ENCODE measurements at regions of chr14 and their contacts with region 1.

Region 1: DNA sequence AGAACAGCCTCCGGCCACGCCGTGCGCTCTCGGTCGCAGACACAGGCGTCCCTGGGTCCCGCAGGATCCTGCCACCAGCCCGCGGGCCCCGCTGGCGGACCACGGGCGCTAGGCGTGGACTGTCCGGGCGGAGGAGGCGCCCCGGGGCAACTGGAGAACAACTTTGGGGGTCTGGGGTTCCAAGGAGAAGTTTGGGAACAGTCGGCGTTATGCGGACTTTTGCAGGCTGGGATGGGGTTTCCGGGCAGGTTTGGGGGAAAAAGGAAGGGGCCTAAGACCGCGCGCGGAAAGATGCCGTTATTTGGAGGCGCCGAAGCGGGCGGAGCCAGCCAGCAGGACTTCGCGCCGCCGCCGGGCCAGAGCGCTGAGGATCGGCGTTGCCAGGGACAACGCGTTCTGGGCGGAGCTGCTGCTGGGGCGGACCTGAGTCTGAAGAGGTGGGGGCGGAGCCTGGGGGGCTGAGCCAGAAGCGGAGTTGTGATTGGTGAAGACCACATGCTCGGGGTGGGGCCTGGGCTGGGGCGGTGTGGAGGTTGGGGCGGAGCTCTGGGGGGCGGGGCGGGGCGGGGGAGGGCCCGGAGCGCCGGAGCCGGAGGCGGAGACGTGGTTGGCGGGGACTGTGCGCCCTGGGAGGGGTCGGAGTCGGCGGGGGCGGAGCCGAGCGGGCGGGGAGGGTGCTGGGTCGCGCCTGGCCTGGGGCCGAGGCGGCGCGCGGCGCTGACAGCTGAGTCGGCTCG is at the start of gene CYP46A1:
- DNase-seq: peak; percentile 98 to 100
- H3K4me3 ChIP-seq: peak within 1 kb of the TSS; percentile 92 to 96
- H3K27ac ChIP-seq: peak within 1 kb of the TSS; percentile 92 to 97
- H3K4me1 ChIP-seq: peaks cover 0 to 5% of the 10 kb centered on the region in 2 donors
- H3K27me3 ChIP-seq: no peaks in the 10 kb centered on the region
- CTCF ChIP-seq: no peak
- total RNA-seq, gene CYP46A1: not detected

Region 2: DNA sequence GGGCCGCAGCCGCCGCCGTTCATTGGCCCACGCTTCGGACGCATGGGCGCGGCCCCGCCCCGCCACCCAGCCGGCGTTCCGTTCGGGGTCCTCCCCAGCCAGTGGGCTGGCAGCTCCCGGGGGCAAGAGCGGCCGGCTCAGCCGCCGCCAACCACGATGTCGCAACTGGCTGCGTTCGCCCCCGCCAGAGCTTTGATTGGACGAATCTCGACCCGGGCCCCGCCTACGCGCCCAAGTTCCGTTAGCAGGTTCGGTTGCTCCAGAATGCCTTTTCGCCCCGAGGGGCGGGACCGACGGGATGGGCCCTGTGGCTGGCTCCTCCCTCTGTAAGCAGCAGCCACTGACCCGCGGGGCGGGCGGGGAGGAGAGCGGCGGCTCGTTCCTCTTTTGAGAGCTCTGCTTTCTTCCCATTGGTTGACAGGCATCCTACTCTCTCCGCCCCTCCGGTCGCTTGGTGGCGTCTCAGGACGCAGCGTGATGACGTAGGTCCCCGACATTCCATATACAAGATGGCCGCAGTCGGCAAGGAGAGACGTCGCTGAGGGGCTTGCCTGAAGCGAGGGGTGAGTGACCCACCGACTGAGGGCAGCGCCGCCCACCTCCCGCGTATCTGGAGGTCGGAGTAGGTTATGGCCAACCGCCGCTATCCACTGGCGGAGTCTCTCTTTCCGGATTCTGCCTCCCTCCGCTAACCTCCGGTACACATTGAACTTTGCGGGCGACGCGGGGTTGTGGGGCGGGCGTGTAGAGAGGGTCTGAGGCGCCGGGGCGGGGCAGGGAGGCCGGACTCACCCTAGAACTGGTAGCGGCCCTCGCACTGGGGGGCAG is 202.7 kb before region 1 on chr14 and contains the start of gene CCNK:
- intact Hi-C with region 1: loop called (anchors 1 kb)
- DNase-seq: peak; percentile 100
- H3K4me3 ChIP-seq: peak within 1 kb of the TSS; percentile 87 to 95
- H3K27ac ChIP-seq: peak within 1 kb of the TSS; percentile 96 to 98
- H3K4me1 ChIP-seq: peaks cover 6 to 34% of the 10 kb centered on the region in 2 donors
- H3K27me3 ChIP-seq: no peaks in the 10 kb centered on the region
- CTCF ChIP-seq: no peak
- total RNA-seq, gene CCNK: 21.9 TPM

Region 3: GRCh38 chr14:99729991-99730868 is 46.4 kb after region 1 on chr14:
- intact Hi-C with region 1: loop called (anchors 2 kb)
- DNase-seq: peak; percentile 1 to 81
- H3K4me3 ChIP-seq: peak overlapping the region; percentile 52 to 85
- H3K27ac ChIP-seq: peak overlapping the region; percentile 22 to 30
- H3K4me1 ChIP-seq: peaks cover 3 to 13% of the 10 kb centered on the region in 2 donors
- H3K27me3 ChIP-seq: no peaks in the 10 kb centered on the region
- CTCF ChIP-seq: peak; percentile 66 to 89 (median 78)

Region 4: GRCh38 chr14:99884834-99885648 is 201.3 kb after region 1 on chr14:
- intact Hi-C with region 1: loop called (anchors 1 kb)
- DNase-seq: no peak
- H3K4me3 ChIP-seq: no peak overlapping the region
- H3K27ac ChIP-seq: no peak overlapping the region
- H3K4me1 ChIP-seq: peaks cover 0 to 4% of the 10 kb centered on the region in 2 donors
- H3K27me3 ChIP-seq: no peaks in the 10 kb centered on the region
- CTCF ChIP-seq: peak; percentile 44 to 76 (median 63)

Region 5: DNA sequence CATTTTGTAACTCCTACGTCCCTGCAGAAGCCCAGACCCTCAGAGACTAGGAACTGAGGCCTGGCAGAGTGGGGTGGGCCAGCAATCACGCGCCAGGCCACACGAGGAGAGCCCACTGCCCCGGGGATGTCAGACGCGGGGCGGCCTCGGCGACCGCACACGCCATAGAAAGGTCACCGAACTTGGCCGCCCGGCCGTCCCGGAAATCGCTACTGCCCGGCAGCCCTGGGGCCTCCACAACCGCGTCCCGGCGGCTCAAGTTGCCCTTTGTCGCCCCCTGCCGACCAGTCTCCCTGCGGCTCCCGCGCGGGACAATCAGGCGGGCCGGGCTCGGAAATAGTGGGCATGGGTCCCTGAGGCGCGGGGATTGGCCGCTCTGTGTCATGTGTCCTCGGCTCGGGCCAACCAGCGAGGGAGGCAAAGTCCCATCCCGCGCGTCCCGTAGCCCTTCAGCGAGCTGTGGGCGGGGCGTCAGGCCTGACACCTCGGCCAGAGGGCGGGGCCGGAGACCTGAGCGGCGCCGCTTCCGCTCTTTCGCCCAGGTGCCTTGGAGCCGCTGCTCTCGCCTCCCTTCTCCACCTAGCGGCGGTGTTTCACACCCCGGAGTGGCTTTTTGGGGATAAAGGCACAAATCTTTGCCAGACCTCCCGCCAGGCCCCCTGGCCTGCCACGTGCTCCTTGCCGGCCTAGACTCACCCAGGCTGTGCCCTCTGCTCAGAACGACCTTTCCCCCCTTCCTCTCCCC is 509.1 kb after region 1 on chr14:
- intact Hi-C with region 1: loop called (anchors 1 kb)
- DNase-seq: peak; percentile 97 to 100
- H3K4me3 ChIP-seq: peak overlapping the region; percentile 54 to 68
- H3K27ac ChIP-seq: peak overlapping the region; percentile 84 to 94
- H3K4me1 ChIP-seq: peaks cover 0 to 9% of the 10 kb centered on the region in 2 donors
- H3K27me3 ChIP-seq: no peaks in the 10 kb centered on the region
- CTCF ChIP-seq: peak; percentile 79 to 90 (median 81)

Region 6: GRCh38 chr14:100547633-100548294 is 864.0 kb after region 1 on chr14:
- intact Hi-C with region 1: loop called (anchors 10 kb)
- DNase-seq: peak in 1 of 2 donors; percentile 76
- H3K4me3 ChIP-seq: no peak overlapping the region
- H3K27ac ChIP-seq: peak overlapping the region in 1 of 2 donors; percentile 33
- H3K4me1 ChIP-seq: peaks cover 0 to 8% of the 10 kb centered on the region in 2 donors
- H3K27me3 ChIP-seq: no peaks in the 10 kb centered on the region
- CTCF ChIP-seq: no peak

Measured in ascending aorta (tissue), 2 donors.